ENCODE measurements at regions of chr18 and their contacts with region 1.

Region 1: DNA sequence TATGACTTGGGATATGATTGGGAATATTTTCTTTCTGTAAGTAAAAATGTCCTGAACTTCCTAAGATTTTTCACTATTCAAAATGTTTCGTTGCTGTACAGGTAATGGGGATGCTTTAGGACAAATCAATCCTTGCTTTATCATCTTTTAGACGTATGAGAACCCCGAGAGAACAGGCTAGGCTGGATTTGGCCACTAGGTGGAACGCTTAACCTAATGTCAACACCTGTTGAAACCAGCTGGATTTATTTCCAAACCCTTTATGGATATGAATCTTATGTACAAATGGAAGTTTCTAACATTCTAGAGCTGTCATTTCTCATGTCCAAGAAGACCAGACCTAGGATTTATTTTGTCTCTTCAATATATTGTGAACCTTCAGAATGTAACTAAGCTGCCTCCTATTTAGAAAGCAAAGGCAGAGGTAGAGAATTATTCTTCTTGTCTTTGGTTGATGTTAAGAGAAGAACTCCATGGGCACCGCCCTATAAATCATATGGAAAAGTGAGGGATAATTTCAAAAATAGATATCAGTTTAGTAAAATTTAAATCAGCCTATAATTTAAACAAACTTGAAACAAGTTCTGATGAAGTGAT is 96.7 kb downstream of the PMAIP1 start:
- DNase-seq: peak in 1 of 2 experiments; percentile 30
- H3K4me3 ChIP-seq: no peak overlapping the region
- H3K27ac ChIP-seq: no peak overlapping the region
- H3K4me1 ChIP-seq: no peaks in the 10 kb centered on the region
- H3K27me3 ChIP-seq: no peaks in the 10 kb centered on the region
- CTCF ChIP-seq: peak; percentile 88

Region 2: GRCh38 chr18:59459369-59460079 is 536.9 kb before region 1 on chr18:
- CTCF ChIA-PET with region 1: no interaction called
- POLR2A ChIA-PET with region 1: no interaction called
- intact Hi-C with region 1: loop called (anchors 10 kb)
- DNase-seq: peak in 1 of 2 experiments; percentile 49
- H3K4me3 ChIP-seq: no peak overlapping the region
- H3K27ac ChIP-seq: no peak overlapping the region
- H3K4me1 ChIP-seq: peaks cover 10% of the 10 kb centered on the region
- H3K27me3 ChIP-seq: no peaks in the 10 kb centered on the region; the same call in 1 of the 2 replicates
- CTCF ChIP-seq: peak; percentile 83

Region 3: DNA sequence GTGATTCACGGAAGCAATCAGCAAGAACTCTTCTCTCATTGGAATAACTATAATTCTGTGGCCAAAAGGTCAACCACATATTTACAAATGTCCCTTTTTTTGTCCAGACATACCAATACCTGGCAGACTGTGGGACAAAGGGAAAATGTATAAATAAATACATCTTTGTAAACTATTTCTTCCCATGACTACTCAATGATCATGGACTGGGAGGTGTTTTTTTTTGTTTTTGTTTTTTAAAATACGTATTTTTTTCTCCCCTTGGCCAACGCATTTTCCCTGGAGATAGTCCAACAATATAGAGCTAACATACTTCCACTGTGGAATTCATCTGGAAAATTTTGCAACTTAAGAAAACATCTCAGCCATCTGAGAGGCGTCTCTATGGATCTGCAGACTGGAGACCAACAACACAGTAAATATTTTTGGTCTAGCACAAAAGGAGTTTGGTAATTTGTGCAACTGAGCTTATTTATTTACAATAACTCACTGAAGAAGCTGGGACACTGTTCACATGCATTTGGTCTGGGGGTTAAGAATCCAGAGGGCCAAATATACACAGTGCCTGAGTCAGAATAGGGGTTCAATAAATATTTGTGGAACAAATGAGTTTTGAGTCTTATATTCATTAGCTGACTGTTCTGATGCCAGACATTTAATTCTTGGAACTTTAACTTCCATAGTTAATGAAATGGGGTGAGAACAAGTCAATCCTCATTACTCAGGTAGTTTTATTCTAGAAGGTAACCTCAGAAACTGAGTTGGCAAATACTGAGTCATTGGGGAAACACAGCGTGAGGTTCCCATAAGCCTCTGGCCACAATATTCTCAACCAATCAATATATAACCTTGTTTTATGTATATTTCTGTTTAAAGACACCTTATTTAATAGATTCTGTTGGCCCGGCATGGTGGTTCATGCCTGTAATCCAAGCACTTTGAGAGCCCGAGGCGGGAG is 335.4 kb before region 1 on chr18:
- CTCF ChIA-PET with region 1: no interaction called
- POLR2A ChIA-PET with region 1: interaction called, 12 read pairs
- intact Hi-C with region 1: no loop called
- DNase-seq: peak in 1 of 2 experiments; percentile 83
- H3K4me3 ChIP-seq: no peak overlapping the region
- H3K27ac ChIP-seq: peak overlapping the region; percentile 92
- H3K4me1 ChIP-seq: peaks cover 49% of the 10 kb centered on the region
- H3K27me3 ChIP-seq: no peaks in the 10 kb centered on the region
- CTCF ChIP-seq: no peak

Region 4: GRCh38 chr18:59837586-59837985 is 158.9 kb before region 1 on chr18:
- CTCF ChIA-PET with region 1: no interaction called
- POLR2A ChIA-PET with region 1: no interaction called
- intact Hi-C with region 1: loop called (anchors 2 kb)
- DNase-seq: peak; percentile 38 to 62
- H3K4me3 ChIP-seq: no peak overlapping the region
- H3K27ac ChIP-seq: no peak overlapping the region
- H3K4me1 ChIP-seq: no peaks in the 10 kb centered on the region
- H3K27me3 ChIP-seq: no peaks in the 10 kb centered on the region
- CTCF ChIP-seq: peak; percentile 93

Region 5: DNA sequence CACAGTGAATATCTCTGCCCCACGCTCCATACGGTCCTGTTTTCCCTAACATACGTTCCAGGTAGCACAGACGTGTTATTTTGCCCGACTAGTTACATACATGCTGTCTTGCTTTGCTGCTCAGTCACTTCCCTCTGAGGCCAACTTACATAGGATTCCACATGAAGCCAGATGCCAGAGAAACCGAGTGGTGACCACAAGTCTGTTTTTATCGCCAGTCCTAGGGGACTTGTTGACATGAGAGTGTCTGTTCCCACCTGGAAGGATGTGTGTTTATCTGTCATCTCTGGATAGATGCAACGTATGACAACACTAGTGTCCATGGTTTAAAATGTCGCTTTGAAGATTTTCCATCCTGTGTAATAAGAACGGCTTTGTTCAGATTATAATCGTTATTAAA is 64.1 kb before region 1 on chr18:
- CTCF ChIA-PET with region 1: no interaction called
- POLR2A ChIA-PET with region 1: no interaction called
- intact Hi-C with region 1: no loop called
- DNase-seq: no peak
- H3K4me3 ChIP-seq: no peak overlapping the region
- H3K27ac ChIP-seq: no peak overlapping the region
- H3K4me1 ChIP-seq: no peaks in the 10 kb centered on the region
- H3K27me3 ChIP-seq: no peaks in the 10 kb centered on the region
- CTCF ChIP-seq: no peak

Region 6: GRCh38 chr18:59980188-59980637 is 16.3 kb before region 1 on chr18:
- CTCF ChIA-PET with region 1: no interaction called
- POLR2A ChIA-PET with region 1: no interaction called
- intact Hi-C with region 1: no loop called
- DNase-seq: no peak
- H3K4me3 ChIP-seq: no peak overlapping the region
- H3K27ac ChIP-seq: no peak overlapping the region
- H3K4me1 ChIP-seq: peaks cover 17% of the 10 kb centered on the region
- H3K27me3 ChIP-seq: no peaks in the 10 kb centered on the region
- CTCF ChIP-seq: no peak

Region 7: GRCh38 chr18:60176259-60176658 is 179.8 kb after region 1 on chr18:
- CTCF ChIA-PET with region 1: no interaction called
- POLR2A ChIA-PET with region 1: no interaction called
- intact Hi-C with region 1: no loop called
- DNase-seq: no peak
- H3K4me3 ChIP-seq: no peak overlapping the region
- H3K27ac ChIP-seq: no peak overlapping the region
- H3K4me1 ChIP-seq: no peaks in the 10 kb centered on the region
- H3K27me3 ChIP-seq: no peaks in the 10 kb centered on the region
- CTCF ChIP-seq: no peak

Region 8: DNA sequence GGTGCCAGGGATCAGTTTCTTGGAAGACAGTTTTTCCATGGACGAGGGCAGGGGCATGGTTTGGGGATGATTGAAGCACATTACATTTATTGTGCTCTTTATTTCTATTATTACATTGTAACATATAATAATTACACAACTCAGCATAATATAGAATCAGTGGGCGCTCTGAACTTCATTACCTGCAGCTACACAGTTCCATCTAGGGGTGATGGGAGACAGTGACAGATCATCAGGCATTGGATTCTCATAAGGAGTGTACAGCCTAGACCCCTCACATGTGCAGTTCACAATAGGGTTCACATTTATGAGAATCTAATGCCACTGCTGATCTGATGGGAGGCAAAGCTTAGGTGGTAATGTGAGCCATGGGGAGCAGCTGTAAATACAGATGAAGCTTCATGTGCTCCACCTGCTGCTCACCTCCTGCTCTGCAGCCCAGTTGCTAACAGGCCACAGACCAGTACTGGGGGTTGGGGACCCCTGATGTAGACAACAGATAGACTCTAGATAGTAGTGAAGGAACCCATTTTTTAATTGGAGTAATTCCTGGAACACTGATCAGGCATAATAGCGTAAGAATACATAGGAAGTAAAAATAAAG is 417.6 kb after region 1 on chr18:
- CTCF ChIA-PET with region 1: interaction called, 8 read pairs
- POLR2A ChIA-PET with region 1: no interaction called
- intact Hi-C with region 1: loop called (anchors 1 kb)
- DNase-seq: peak in 1 of 2 experiments; percentile 3
- H3K4me3 ChIP-seq: no peak overlapping the region
- H3K27ac ChIP-seq: no peak overlapping the region
- H3K4me1 ChIP-seq: no peaks in the 10 kb centered on the region
- H3K27me3 ChIP-seq: no peaks in the 10 kb centered on the region
- CTCF ChIP-seq: peak; percentile 68

Region 9: DNA sequence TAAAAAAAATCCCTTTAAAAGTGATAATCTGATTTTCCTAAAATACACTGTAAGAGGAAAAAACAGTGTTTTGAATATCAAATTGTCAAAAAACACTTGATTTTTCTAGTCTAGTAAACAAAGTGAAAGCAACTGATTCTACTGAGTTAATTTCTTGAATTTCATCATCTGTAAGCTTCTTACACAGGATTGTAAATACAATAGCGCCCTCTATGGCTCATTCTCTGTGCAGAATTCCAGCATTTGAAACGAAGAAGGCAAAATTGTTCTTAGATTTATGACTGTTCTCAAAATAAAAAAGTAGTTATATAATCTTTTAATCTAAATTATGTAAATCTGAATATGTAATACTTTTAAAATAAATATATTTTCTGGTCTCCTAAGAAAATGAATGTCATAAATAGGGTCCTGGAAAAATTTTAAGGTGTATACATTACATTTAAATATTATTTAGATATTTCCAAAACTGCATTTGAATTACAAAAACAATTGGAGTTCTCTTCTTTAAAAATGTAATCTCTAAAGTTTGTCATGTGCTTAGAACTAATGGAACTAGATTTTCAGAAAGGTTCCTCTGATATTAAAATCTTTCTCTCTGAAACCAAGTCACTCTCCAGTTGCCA is 553.0 kb after region 1 on chr18:
- CTCF ChIA-PET with region 1: no interaction called
- POLR2A ChIA-PET with region 1: no interaction called
- intact Hi-C with region 1: loop called (anchors 1 kb)
- DNase-seq: peak in 1 of 2 experiments; percentile 58
- H3K4me3 ChIP-seq: peak overlapping the region; percentile 35; the same call in 1 of the 2 replicates
- H3K27ac ChIP-seq: no peak overlapping the region
- H3K4me1 ChIP-seq: no peaks in the 10 kb centered on the region
- H3K27me3 ChIP-seq: no peaks in the 10 kb centered on the region
- CTCF ChIP-seq: peak; percentile 92

Measured in PC-9 (cell line).